ENCODE measurements at regions of chr17 and their contacts with region 1.

Region 1: GRCh38 chr17:56939901-56940343 is 20.9 kb downstream of the COIL start:
- DNase-seq: no peak
- H3K4me3 ChIP-seq: no peak overlapping the region
- H3K27ac ChIP-seq: peak overlapping the region in 2 of 8 donors; percentile 13 to 40
- H3K4me1 ChIP-seq: peaks cover 0 to 13% (median 5%) of the 10 kb centered on the region in 6 donors
- H3K27me3 ChIP-seq: no peaks in the 10 kb centered on the region
- CTCF ChIP-seq: peak; percentile 45 to 79 (median 75)
- POLR2A ChIP-seq: no peak

Region 2: GRCh38 chr17:56752263-56752866 is 187.6 kb before region 1 on chr17:
- intact Hi-C with region 1: no loop called
- DNase-seq: no peak
- H3K4me3 ChIP-seq: no peak overlapping the region
- H3K27ac ChIP-seq: no peak overlapping the region
- H3K4me1 ChIP-seq: peaks cover 0 to 47% (median 11%) of the 10 kb centered on the region in 6 donors
- H3K27me3 ChIP-seq: peaks cover 0 to 4% (median 0%) of the 10 kb centered on the region in 7 donors
- CTCF ChIP-seq: no peak
- POLR2A ChIP-seq: no peak

Region 3: DNA sequence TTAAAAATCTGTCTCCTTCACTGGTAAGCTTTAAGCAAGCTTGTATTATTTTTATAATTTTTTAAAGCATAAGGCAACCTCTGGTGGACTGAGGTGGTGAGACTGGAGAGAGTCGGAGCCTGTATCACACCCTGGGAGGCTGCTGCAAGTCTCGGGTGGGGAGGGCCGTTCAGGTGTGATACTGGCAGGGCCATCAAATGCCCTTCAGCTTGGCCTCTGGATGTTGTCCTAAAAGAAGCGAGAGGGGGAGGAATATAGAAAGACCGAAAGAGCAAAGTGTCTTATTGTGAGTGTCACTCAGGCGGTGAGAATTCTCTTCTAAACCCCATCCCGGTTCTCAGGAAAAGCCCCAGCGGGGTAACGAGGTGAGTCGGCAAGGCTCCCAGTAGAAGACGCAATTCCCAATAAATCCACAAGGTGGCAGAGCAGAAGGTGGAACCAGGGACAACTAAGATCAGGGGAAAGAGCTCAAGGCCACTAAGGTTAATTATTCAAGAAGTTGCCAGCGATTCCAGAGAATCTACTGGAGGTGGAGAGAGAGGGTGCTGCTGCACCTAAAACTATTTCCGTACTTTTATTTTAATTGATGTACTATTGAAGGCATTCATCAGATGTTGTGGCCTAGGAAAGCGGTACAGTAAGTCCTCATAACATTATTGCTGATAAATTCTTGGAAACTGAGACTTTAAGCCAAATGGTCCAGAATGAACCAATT is 120.3 kb before region 1 on chr17:
- intact Hi-C with region 1: loop called (anchors 5 kb)
- DNase-seq: peak; percentile 63
- H3K4me3 ChIP-seq: no peak overlapping the region
- H3K27ac ChIP-seq: peak overlapping the region in 1 of 8 donors; percentile 16
- H3K4me1 ChIP-seq: peaks cover 3 to 24% (median 8%) of the 10 kb centered on the region in 6 donors
- H3K27me3 ChIP-seq: no peaks in the 10 kb centered on the region
- CTCF ChIP-seq: peak; percentile 81 to 94 (median 92)
- POLR2A ChIP-seq: no peak

Region 4: GRCh38 chr17:57186226-57187019 is 246.5 kb after region 1 on chr17:
- intact Hi-C with region 1: no loop called
- DNase-seq: no peak
- H3K4me3 ChIP-seq: no peak overlapping the region
- H3K27ac ChIP-seq: peak overlapping the region in 1 of 8 donors; percentile 7
- H3K4me1 ChIP-seq: peaks cover 0 to 9% (median 2%) of the 10 kb centered on the region in 6 donors
- H3K27me3 ChIP-seq: peaks cover 0 to 5% (median 0%) of the 10 kb centered on the region in 7 donors
- CTCF ChIP-seq: no peak
- POLR2A ChIP-seq: no peak